Transverse colon (tissue), 4 donors: ENCODE measurements at regions of chr7 and their contacts with region 1.

Region 1: DNA sequence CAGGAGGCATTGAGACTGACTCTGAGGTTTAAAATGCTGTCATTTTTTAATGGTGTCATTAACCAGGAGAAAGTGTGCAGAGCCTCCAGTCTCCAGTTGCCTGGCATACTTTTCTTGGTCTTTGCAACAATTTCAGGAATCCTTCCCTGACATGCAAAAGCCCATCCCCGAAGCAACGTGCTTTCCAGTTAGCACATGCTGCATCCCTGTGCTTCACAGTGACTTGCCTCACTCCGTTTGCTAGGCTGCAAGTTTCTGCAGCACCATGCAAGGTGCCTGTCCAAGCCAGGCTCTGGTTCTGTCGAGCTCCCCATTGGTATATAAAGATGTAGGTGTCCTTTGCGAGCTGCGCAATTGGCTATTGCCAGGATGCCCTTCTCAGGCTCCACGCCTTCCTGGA is 135.0 kb downstream of the GALNT17 start:
- DNase-seq: no peak
- H3K4me3 ChIP-seq: no peak overlapping the region
- H3K27ac ChIP-seq: peak overlapping the region in 1 of 4 donors; percentile 11
- H3K4me1 ChIP-seq: peaks cover 0 to 7% (median 2%) of the 10 kb centered on the region in 4 donors
- H3K27me3 ChIP-seq: no peaks in the 10 kb centered on the region
- CTCF ChIP-seq: no peak
- EP300 ChIP-seq: no peak
- POLR2A ChIP-seq: no peak

Region 2: GRCh38 chr7:71560354-71560995 is 293.6 kb after region 1 on chr7:
- in situ Hi-C with region 1: no loop called
- intact Hi-C with region 1: loop called (anchors 5 kb)
- DNase-seq: no peak
- H3K4me3 ChIP-seq: no peak overlapping the region
- H3K27ac ChIP-seq: no peak overlapping the region
- H3K4me1 ChIP-seq: no peaks in the 10 kb centered on the region
- H3K27me3 ChIP-seq: no peaks in the 10 kb centered on the region
- CTCF ChIP-seq: no peak
- EP300 ChIP-seq: no peak
- POLR2A ChIP-seq: no peak